Kidney (tissue), 22 donors: ENCODE measurements at regions of chr3 and their contacts with region 1.

Region 1: GRCh38 chr3:183895296-183895695 is 10.6 kb upstream of the PARL start:
- DNase-seq: peak in 3 of 5 donors; percentile 30 to 70 (median 36)
- H3K4me3 ChIP-seq: no peak overlapping the region
- H3K27ac ChIP-seq: no peak overlapping the region
- H3K4me1 ChIP-seq: no peaks in the 10 kb centered on the region
- H3K27me3 ChIP-seq: no peaks in the 10 kb centered on the region
- CTCF ChIP-seq: peak; percentile 87

Region 2: GRCh38 chr3:184017672-184018423 is 122.6 kb after region 1 on chr3 and contains the start of gene ABCC5:
- intact Hi-C with region 1: loop called (anchors 10 kb)
- DNase-seq: peak; percentile 96 to 98 (median 97)
- H3K4me3 ChIP-seq: peak within 1 kb of the TSS; percentile 89 to 99 (median 94)
- H3K27ac ChIP-seq: peak within 1 kb of the TSS; percentile 58 to 91
- H3K4me1 ChIP-seq: peaks cover 3 to 10% (median 9%) of the 10 kb centered on the region in 3 donors
- H3K27me3 ChIP-seq: no peaks in the 10 kb centered on the region
- CTCF ChIP-seq: no peak
- total RNA-seq, gene ABCC5: 39.3 TPM